Activated CD4-positive, alpha-beta T cell treated with anti-CD3 and anti-CD28 coated beads for 36 hours (primary cell): ENCODE measurements at regions of chr9 and their contacts with region 1.

Region 1: DNA sequence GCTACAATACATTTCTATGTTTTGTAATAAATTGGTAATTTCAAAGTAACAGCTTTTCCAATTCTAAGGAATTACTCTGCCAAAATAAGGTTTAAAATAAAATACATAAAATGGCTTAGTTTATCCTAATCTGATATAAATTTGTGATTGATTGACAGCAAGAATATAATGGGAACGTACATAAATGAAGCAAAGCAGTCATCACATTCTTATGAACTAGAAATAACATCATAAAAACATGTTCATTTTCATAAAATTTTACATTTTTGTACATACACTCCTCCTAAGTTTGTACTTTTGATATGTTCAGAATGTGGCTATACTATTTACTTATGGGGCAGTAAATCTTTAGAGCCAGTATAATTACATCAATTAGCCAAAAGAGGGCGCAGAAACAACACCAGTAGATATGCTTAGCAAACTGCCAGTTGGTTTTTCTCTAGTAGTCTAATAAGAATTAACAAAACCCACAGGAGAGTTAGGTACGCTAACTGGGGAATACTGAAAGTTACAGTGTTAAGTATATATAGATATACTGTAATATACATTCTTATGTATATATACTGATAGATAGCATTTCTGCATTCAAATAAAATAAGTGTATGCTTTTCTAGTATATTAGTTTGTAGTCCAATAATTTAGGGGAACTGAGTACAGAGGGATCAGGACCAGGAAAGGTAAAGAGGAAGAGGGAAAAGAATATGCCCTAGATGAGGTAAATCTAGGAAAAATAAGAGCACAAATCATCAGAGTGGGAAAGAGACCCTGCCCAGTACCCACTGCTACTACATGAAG is 76.8 kb downstream of the ZDHHC21 start:
- DNase-seq: no peak
- ATAC-seq: no peak
- H3K4me3 Mint-ChIP-seq: no peak overlapping the region
- H3K27ac Mint-ChIP-seq: no peak overlapping the region
- H3K4me1 Mint-ChIP-seq: no peaks in the 10 kb centered on the region
- H3K27me3 Mint-ChIP-seq: no peaks in the 10 kb centered on the region

Region 2: GRCh38 chr9:13324988-13325387 is 1291.4 kb before region 1 on chr9:
- CTCF ChIA-PET with region 1: no interaction called
- POLR2A ChIA-PET with region 1: no interaction called
- intact Hi-C with region 1: loop called in 1 of 2 experiments (anchors 2 kb)
- DNase-seq: no peak
- ATAC-seq: no peak
- H3K4me3 Mint-ChIP-seq: no peak overlapping the region
- H3K27ac Mint-ChIP-seq: no peak overlapping the region
- H3K4me1 Mint-ChIP-seq: no peaks in the 10 kb centered on the region
- H3K27me3 Mint-ChIP-seq: no peaks in the 10 kb centered on the region

Region 3: GRCh38 chr9:14111696-14112095 is 504.7 kb before region 1 on chr9:
- CTCF ChIA-PET with region 1: no interaction called
- POLR2A ChIA-PET with region 1: no interaction called
- intact Hi-C with region 1: no loop called
- DNase-seq: no peak
- ATAC-seq: no peak
- H3K4me3 Mint-ChIP-seq: no peak overlapping the region
- H3K27ac Mint-ChIP-seq: no peak overlapping the region
- H3K4me1 Mint-ChIP-seq: no peaks in the 10 kb centered on the region
- H3K27me3 Mint-ChIP-seq: no peaks in the 10 kb centered on the region

Region 4: DNA sequence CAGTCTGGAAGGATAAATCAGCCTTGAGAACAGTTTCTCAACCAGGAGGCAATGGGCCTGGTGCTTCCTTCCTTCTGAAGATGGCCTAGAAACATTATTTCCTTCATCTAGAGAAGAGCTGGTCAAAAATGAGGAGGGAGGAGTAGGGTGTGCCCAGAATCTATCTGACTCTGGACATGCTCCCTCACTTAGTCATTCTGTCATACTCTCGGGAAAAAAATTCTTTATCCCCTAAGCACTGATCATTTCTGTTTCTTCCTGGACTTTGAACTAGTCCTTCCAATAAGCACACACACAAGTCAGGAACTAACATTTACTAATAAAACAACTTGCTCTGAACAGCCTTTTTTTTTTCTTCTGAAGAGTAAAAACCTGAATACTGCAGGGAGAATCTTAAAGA is 83.7 kb before region 1 on chr9:
- CTCF ChIA-PET with region 1: no interaction called
- POLR2A ChIA-PET with region 1: no interaction called
- intact Hi-C with region 1: no loop called
- DNase-seq: no peak
- ATAC-seq: no peak
- H3K4me3 Mint-ChIP-seq: no peak overlapping the region
- H3K27ac Mint-ChIP-seq: no peak overlapping the region
- H3K4me1 Mint-ChIP-seq: no peaks in the 10 kb centered on the region
- H3K27me3 Mint-ChIP-seq: peaks cover 10% of the 10 kb centered on the region

Region 5: DNA sequence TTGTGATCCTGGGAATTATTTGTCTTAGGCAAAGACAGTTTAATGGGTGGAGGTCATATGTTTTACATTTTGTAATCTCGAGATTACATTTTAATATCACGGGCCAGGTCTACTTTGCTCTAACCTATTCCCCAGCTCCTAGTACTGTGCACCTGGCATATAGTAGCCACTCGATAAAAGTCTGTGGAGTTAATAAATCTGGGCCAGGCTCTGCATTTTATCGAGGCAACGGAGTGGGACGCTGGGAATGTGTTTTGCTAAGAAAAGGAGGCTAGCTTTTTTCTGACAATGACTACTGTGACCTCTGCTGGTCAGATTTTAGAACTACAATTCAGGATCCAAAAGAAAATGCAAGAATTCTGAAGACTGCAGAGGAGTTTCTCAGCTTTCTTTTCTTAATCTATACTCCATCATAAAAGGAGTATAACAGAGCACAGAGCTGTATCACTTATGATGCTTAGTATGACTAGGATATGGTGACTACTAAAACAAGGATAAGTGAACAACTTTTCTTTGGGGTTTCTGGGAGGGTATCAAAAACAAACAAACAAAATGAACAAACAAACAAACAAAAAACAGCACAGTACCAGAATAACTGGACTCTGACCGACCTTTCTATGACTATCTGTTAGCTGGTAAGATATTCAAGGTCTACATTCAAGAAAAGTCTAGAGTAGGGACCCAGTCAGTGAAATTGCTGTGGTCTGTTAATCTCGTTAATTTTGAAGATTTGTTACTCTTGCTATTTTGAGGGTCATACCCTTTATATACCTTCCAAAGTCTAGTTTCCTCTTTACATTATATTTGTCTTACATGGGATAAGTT is 152.2 kb after region 1 on chr9:
- CTCF ChIA-PET with region 1: interaction called, 48 read pairs
- POLR2A ChIA-PET with region 1: no interaction called
- intact Hi-C with region 1: loop called (anchors 1 kb)
- DNase-seq: no peak
- ATAC-seq: no peak
- H3K4me3 Mint-ChIP-seq: no peak overlapping the region
- H3K27ac Mint-ChIP-seq: no peak overlapping the region
- H3K4me1 Mint-ChIP-seq: no peaks in the 10 kb centered on the region
- H3K27me3 Mint-ChIP-seq: peaks cover 27% of the 10 kb centered on the region

Region 6: DNA sequence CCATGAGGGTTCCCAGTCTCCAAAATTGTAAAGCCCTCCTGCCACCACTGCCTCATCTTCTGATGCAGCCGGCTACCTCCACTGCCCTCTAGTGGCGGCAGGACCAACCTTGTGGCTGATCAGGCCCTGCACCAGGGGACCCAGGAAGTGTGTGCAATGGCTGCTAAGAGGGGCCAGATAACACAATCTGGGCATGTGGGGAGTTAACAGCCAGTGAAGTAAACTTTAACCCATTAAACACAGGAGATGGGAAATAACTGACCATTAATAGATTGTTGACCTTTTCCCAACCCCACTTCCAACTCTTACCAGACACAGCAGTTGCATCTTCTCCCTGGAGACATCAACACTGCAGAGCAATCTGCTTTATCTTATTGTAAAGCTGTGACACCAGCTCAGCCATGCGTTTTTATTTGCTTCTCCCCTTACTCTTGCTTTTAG is 230.5 kb after region 1 on chr9:
- CTCF ChIA-PET with region 1: no interaction called
- POLR2A ChIA-PET with region 1: no interaction called
- intact Hi-C with region 1: loop called in 1 of 2 experiments (anchors 5 kb)
- DNase-seq: peak; percentile 82
- ATAC-seq: peak; percentile 91
- H3K4me3 Mint-ChIP-seq: no peak overlapping the region
- H3K27ac Mint-ChIP-seq: no peak overlapping the region
- H3K4me1 Mint-ChIP-seq: no peaks in the 10 kb centered on the region
- H3K27me3 Mint-ChIP-seq: peaks cover 25% of the 10 kb centered on the region

Region 7: GRCh38 chr9:15142878-15143534 is 526.6 kb after region 1 on chr9:
- CTCF ChIA-PET with region 1: no interaction called
- POLR2A ChIA-PET with region 1: no interaction called
- intact Hi-C with region 1: loop called in 1 of 2 experiments (anchors 10 kb)
- DNase-seq: no peak
- ATAC-seq: peak; percentile 84
- H3K4me3 Mint-ChIP-seq: no peak overlapping the region
- H3K27ac Mint-ChIP-seq: no peak overlapping the region
- H3K4me1 Mint-ChIP-seq: peaks cover 3% of the 10 kb centered on the region
- H3K27me3 Mint-ChIP-seq: peaks cover 7% of the 10 kb centered on the region